ENCODE measurements at regions of chr3 and their contacts with region 1.

Region 1: DNA sequence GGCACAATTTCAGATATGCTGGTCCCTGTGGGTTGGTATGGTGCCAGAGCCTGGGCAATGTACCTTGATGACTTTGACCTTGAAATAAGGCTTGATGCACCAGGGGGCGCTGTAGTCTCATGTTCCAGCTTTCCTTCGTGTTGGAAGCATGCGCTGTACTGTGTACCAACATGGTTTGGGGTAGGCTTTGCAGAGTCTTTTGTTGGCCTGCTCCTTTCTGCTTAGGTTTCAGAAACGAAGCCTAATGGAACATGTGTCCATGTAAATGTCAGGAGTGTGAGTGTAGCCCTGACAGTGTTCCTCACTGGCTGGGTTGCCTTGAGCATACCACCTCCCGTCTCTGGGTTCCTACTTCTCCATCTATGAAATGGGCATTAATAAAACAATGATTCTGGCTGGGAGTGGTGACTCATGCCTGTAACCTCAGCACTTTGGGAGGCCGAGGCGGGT is 3.6 kb upstream of the CCR4 start:
- DNase-seq: no peak
- H3K4me3 ChIP-seq: no peak overlapping the region
- H3K27me3 ChIP-seq: no peaks in the 10 kb centered on the region; the same call in 1 of the 2 replicates
- CTCF ChIP-seq: peak; percentile 83

Region 2: DNA sequence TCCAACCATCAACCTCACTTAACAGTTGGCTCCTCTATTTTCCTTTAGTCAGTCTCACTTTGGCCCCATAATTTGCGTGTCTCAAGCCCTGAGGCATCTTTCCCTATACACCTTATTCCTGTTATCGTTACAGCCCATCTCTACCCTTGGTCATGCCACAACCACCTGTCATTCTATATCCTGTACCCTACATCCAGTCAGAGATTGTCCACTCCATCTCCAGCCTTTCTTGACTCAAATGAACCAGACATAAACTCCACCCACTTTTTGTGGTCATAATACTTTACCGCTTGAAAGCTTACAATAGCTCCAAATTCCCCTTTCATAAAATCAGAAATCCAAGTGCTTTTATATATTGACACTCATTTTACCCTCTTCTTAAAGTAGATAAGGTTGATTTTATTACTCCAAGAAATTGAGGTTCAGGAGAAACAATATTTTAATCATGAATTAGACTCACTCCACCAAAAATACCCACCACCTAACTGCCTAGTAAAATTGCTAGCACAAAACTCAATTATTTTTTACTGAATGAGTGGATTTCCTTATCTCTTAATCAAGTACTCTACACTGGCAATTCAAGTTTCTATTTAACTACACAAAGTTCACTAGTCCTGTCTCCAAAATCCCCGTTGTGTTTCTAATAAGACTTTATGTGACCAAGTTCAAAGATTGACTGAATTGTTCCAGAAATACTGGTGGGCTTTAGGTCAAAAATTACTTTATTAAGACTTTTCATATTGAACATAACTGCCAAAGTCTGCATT is 12.8 kb after region 1 on chr3:
- CTCF ChIA-PET with region 1: interaction called, 18 read pairs
- POLR2A ChIA-PET with region 1: no interaction called
- DNase-seq: no peak
- H3K4me3 ChIP-seq: no peak overlapping the region
- H3K27me3 ChIP-seq: peaks cover 4% of the 10 kb centered on the region
- CTCF ChIP-seq: no peak

Region 3: DNA sequence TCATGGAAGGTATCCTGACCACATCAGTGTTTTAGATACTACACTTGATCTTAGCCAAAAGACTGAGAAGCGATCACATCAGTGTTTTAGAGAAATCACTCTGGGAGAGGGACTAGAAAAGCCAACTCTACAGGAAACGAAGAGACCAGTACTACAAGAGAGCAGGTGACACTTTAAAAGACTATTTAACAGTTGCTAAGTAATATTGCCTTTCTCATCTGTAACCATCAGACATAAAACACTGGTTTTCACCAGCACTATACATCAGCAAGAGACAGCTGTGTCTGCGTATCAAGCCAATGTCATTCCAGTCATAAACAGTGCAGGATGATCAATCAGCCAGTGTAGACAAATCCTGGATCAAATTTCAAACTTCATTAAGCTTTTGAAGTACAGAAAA is 82.4 kb after region 1 on chr3:
- CTCF ChIA-PET with region 1: no interaction called
- POLR2A ChIA-PET with region 1: no interaction called
- DNase-seq: no peak
- H3K4me3 ChIP-seq: no peak overlapping the region
- H3K27me3 ChIP-seq: no peaks in the 10 kb centered on the region
- CTCF ChIP-seq: no peak

Measured in BJ (cell line).